ENCODE measurements at regions of chr10 and their contacts with region 1.

Region 1: GRCh38 chr10:61284222-61284890 is 168.8 kb downstream of the TMEM26 start:
- DNase-seq: no peak
- H3K4me3 Mint-ChIP-seq: peak overlapping the region; percentile 41
- H3K27ac Mint-ChIP-seq: no peak overlapping the region
- H3K4me1 Mint-ChIP-seq: peaks cover 17% of the 10 kb centered on the region
- H3K27me3 Mint-ChIP-seq: peaks cover 2% of the 10 kb centered on the region

Region 2: DNA sequence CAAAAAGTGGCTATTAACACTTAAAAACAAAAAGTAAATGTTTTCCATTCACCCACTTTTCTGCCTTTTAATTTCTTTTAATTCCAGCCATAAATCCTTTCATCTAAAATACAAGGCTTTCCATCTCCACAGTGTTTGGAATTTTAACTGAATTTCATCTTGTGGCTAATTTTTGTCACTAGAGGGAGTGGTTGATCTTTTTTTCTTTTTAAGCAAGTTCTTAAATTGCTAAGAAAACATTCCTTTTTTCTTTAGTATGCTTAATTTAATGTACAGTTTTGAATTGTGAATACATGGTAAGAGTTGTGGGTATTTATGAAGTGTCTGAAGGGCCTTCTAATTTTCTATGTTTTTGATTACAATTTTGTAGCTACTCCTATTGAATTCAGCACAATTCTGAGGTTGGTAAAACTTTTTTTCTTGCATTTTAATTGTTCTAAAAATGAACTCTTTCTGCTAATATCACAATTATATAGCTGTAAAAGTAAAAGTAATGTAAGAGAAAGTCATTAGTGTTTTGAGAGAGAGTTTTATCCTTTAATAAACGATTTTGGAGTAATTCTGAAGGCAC is 839.8 kb before region 1 on chr10:
- CTCF ChIA-PET with region 1: no interaction called
- intact Hi-C with region 1: loop called (anchors 10 kb)
- DNase-seq: no peak
- H3K4me3 Mint-ChIP-seq: no peak overlapping the region
- H3K27ac Mint-ChIP-seq: no peak overlapping the region
- H3K4me1 Mint-ChIP-seq: peaks cover 12% of the 10 kb centered on the region
- H3K27me3 Mint-ChIP-seq: no peaks in the 10 kb centered on the region

Region 3: GRCh38 chr10:60816628-60817397 is 467.5 kb before region 1 on chr10:
- CTCF ChIA-PET with region 1: no interaction called
- intact Hi-C with region 1: loop called (anchors 1 kb)
- DNase-seq: peak; percentile 56
- H3K4me3 Mint-ChIP-seq: no peak overlapping the region
- H3K27ac Mint-ChIP-seq: no peak overlapping the region
- H3K4me1 Mint-ChIP-seq: no peaks in the 10 kb centered on the region
- H3K27me3 Mint-ChIP-seq: no peaks in the 10 kb centered on the region

Region 4: GRCh38 chr10:60964257-60965235 is 319.8 kb before region 1 on chr10:
- CTCF ChIA-PET with region 1: no interaction called
- intact Hi-C with region 1: loop called (anchors 1 kb)
- DNase-seq: peak; percentile 66
- H3K4me3 Mint-ChIP-seq: no peak overlapping the region
- H3K27ac Mint-ChIP-seq: no peak overlapping the region
- H3K4me1 Mint-ChIP-seq: peaks cover 17% of the 10 kb centered on the region
- H3K27me3 Mint-ChIP-seq: peaks cover 15% of the 10 kb centered on the region

Region 5: GRCh38 chr10:61140765-61141392 is 143.5 kb before region 1 on chr10:
- CTCF ChIA-PET with region 1: interaction called, 3 read pairs
- intact Hi-C with region 1: loop called (anchors 1 kb)
- DNase-seq: no peak
- H3K4me3 Mint-ChIP-seq: no peak overlapping the region
- H3K27ac Mint-ChIP-seq: no peak overlapping the region
- H3K4me1 Mint-ChIP-seq: no peaks in the 10 kb centered on the region
- H3K27me3 Mint-ChIP-seq: peaks cover 3% of the 10 kb centered on the region

Region 6: DNA sequence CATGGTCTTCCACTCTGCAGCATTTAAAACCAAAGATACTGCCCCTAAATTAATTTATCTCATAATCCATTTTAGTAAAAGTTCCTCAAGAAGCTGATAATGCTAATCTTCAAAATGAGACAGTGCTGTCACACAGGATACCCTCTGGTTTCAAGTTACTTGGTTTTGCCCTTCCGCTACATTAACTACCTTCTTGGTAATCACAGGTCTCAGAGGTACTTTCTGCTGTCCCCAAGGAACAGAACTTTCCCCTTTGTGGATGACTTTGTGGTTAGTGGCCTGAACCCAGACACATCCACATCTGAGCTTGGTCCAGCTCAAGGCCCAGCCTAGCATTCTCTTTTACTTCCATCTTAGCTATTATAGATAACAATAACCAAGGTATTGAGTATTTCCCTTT is 257.6 kb after region 1 on chr10:
- CTCF ChIA-PET with region 1: no interaction called
- intact Hi-C with region 1: no loop called
- DNase-seq: no peak
- H3K4me3 Mint-ChIP-seq: no peak overlapping the region
- H3K27ac Mint-ChIP-seq: no peak overlapping the region
- H3K4me1 Mint-ChIP-seq: no peaks in the 10 kb centered on the region
- H3K27me3 Mint-ChIP-seq: peaks cover 2% of the 10 kb centered on the region

Region 7: DNA sequence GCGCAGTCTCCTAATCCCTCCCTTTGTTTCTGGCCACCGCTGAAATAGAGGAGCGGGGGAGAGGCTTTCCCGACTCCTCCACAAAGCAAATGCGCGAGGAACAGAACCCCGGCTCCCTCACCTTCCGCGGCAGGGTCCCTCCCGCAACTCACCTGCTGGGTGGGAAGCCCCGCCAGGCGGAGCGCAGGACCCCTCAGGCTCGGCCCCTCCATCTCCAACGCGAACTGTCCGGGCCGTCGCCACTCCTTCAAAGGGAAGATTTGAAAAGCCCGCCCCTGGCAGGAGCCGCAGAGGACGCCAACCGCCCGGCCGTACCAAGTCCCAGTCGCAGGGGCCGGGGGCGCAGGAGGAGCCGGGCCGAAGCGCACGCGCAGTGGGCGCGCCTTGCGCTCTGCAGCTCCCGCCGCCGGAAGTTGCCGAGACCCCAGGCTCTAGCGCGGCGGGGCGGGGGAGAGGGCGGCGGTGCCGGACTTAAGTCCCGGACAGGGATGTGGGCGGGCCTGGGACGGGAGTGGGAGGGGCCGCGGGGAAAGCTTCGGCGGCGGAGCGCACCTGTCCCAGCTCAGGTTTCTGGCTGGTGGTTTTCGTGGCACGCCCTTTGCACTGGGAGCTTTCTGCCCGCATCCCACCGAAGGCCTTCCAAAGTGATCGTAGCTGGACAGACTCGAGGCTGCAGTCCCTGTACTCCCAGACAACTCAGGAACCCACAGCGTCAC is 984.2 kb after region 1 on chr10 and contains the start of gene RTKN2:
- CTCF ChIA-PET with region 1: no interaction called
- intact Hi-C with region 1: no loop called
- DNase-seq: peak; percentile 78
- H3K4me3 Mint-ChIP-seq: peak within 1 kb of the TSS; percentile 72
- H3K27ac Mint-ChIP-seq: peak within 1 kb of the TSS; percentile 28
- H3K4me1 Mint-ChIP-seq: peaks cover 23% of the 10 kb centered on the region
- H3K27me3 Mint-ChIP-seq: peaks cover 13% of the 10 kb centered on the region
- total RNA-seq, gene RTKN2: 4.7 to 5.4 TPM

Region 8: GRCh38 chr10:62528441-62528840 is 1244.1 kb after region 1 on chr10:
- CTCF ChIA-PET with region 1: no interaction called
- intact Hi-C with region 1: loop called (anchors 5 kb)
- DNase-seq: no peak
- H3K4me3 Mint-ChIP-seq: peak overlapping the region; percentile 19
- H3K27ac Mint-ChIP-seq: peak overlapping the region; percentile 26
- H3K4me1 Mint-ChIP-seq: peaks cover 37% of the 10 kb centered on the region
- H3K27me3 Mint-ChIP-seq: no peaks in the 10 kb centered on the region